Ascending aorta (tissue), 2 donors: ENCODE measurements at regions of chr16 and their contacts with region 1.

Region 1: GRCh38 chr16:50152807-50153452 is at the start of gene TENT4B:
- DNase-seq: peak; percentile 24 to 90
- H3K4me3 ChIP-seq: peak within 1 kb of the TSS; percentile 69 to 90
- H3K27ac ChIP-seq: peak within 1 kb of the TSS; percentile 96
- H3K4me1 ChIP-seq: peaks cover 0 to 17% of the 10 kb centered on the region in 2 donors
- H3K27me3 ChIP-seq: no peaks in the 10 kb centered on the region
- CTCF ChIP-seq: no peak
- total RNA-seq, gene TENT4B: 38.1 TPM

Region 2: GRCh38 chr16:49701789-49702494 is 451.0 kb before region 1 on chr16:
- intact Hi-C with region 1: loop called (anchors 5 kb)
- DNase-seq: peak; percentile 18 to 80
- H3K4me3 ChIP-seq: peak overlapping the region in 1 of 2 donors; percentile 39
- H3K27ac ChIP-seq: peak overlapping the region; percentile 88 to 89
- H3K4me1 ChIP-seq: peaks cover 7 to 25% of the 10 kb centered on the region in 2 donors
- H3K27me3 ChIP-seq: no peaks in the 10 kb centered on the region
- CTCF ChIP-seq: no peak

Region 3: DNA sequence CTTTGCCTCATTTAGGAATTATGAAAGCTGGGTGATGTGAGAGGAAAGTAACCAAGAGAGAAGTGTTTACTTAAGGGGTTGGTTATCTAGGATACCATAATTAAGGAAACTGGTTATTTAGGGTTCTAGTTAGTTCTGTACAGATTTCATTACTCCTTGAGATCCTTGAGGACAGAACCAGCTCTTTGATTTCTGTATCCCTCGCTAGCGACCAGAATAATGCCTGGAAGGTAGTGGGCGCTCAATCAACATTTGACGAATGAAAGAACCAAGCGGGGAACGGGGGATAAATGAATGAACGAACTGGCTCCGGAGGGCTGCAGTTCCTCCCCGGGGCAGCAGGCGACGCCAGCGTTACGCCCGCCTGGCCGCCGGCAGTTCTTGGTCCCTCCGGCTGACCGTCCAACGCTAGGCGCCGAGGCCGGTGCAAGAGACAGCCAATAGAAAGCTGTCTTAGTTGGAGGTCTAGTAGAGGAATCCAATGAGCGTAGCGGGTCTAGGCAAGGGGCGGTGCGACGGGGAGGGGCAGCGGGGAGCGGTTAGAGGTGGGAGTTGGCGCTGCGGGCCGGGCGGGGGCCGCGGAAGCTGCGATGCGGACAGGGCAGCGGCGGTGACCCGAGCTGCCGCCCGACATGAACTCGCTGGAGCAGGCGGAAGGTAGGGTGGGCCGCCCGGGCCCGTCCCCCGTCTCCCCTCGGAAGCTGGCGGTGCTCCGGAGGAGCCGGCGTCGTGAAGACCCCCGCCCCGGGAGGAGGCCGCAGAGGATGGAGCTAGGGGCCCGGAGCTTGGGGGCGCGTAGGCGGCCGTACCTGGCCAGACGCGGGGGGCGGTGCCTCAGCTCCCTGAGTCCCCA is 128.0 kb before region 1 on chr16 and contains the start of gene CNEP1R1:
- intact Hi-C with region 1: loop called (anchors 2 kb)
- DNase-seq: peak; percentile 81 to 97
- H3K4me3 ChIP-seq: peak within 1 kb of the TSS; percentile 85 to 92
- H3K27ac ChIP-seq: peak within 1 kb of the TSS; percentile 71 to 86
- H3K4me1 ChIP-seq: peaks cover 2 to 7% of the 10 kb centered on the region in 2 donors
- H3K27me3 ChIP-seq: no peaks in the 10 kb centered on the region
- CTCF ChIP-seq: peak; percentile 99 to 100 (median 100)
- total RNA-seq, gene CNEP1R1: 5.9 TPM

Region 4: DNA sequence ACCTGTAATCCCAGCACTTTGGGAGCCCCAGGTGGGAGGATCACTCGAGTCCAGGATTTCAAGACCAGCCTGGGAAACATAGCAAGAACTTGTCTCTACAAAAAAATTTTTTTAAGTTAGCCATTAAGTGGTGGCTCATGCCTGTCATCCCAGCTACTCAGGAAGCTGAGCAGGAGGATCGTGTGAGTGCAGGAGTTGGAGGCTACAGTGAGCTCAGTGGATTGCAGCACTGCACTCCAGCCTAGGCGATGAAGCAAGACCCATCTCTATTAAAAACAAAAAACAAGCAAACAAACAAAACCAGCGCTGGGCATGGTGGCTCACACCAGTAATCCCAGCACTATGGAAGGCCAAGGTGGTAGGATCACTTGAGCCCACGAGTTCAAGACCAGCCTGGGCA is 49.2 kb before region 1 on chr16:
- intact Hi-C with region 1: no loop called
- DNase-seq: no peak
- H3K4me3 ChIP-seq: no peak overlapping the region
- H3K27ac ChIP-seq: no peak overlapping the region
- H3K4me1 ChIP-seq: no peaks in the 10 kb centered on the region
- H3K27me3 ChIP-seq: no peaks in the 10 kb centered on the region
- CTCF ChIP-seq: no peak

Region 5: GRCh38 chr16:50185005-50185505 is 32.1 kb after region 1 on chr16:
- intact Hi-C with region 1: loop called (anchors 1 kb)
- DNase-seq: no peak
- H3K4me3 ChIP-seq: no peak overlapping the region
- H3K27ac ChIP-seq: peak overlapping the region; percentile 6 to 54
- H3K4me1 ChIP-seq: peaks cover 4 to 42% of the 10 kb centered on the region in 2 donors
- H3K27me3 ChIP-seq: no peaks in the 10 kb centered on the region
- CTCF ChIP-seq: no peak

Region 6: GRCh38 chr16:50210266-50211038 is 57.5 kb after region 1 on chr16:
- intact Hi-C with region 1: loop called (anchors 2 kb)
- DNase-seq: peak in 1 of 2 donors; percentile 89
- H3K4me3 ChIP-seq: no peak overlapping the region
- H3K27ac ChIP-seq: peak overlapping the region; percentile 17 to 43
- H3K4me1 ChIP-seq: peaks cover 13 to 44% of the 10 kb centered on the region in 2 donors
- H3K27me3 ChIP-seq: no peaks in the 10 kb centered on the region
- CTCF ChIP-seq: peak; percentile 60 to 78 (median 63)

Region 7: DNA sequence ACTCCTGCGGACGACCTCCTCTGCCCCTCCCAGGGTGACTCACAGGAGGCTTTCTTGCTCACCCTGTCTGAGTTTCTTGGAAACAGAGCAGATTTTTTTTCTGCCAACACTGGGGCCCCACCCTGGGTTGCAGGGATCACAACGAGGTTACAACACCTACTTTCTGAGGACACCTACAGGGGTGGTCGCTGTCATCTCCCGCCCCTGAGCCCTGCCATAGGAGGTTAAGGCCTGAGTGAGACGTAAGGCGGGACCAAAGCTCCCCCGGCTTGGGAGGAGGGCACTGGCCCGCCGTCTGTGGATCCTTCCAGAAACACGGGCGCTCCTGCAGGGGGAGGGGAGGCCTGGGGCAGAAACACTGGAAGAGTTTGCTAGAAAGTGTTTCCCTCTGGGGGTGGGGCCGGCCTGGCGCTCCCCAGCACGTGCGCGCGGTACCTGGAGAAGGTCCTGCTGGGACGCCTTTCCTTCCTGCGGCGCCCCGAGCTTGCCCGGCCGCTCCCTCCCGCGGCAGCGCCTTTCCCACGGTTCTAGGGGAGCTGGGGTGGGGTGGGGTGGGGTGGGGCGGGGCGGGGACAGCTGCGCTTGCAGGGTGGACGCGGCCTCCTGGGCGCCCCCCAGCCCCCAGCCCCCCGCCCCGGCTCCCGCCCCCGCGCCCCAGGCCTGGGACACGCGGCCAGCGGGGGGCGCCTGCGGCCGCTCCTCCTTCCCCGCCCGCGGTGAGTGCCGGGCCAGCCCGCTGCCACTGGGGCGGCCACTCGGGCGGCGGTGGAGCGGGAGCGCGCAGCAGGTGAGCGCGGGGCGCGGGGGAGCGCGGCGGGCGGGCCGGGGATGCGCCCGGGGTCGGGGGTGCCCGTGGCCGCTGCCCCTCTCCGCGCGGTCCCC is 92.7 kb after region 1 on chr16:
- intact Hi-C with region 1: no loop called
- DNase-seq: peak in 1 of 2 donors; percentile 81
- H3K4me3 ChIP-seq: peak overlapping the region; percentile 71 to 77
- H3K27ac ChIP-seq: peak overlapping the region in 1 of 2 donors; percentile 13
- H3K4me1 ChIP-seq: peaks cover 7 to 10% of the 10 kb centered on the region in 2 donors
- H3K27me3 ChIP-seq: no peaks in the 10 kb centered on the region
- CTCF ChIP-seq: peak in 1 of 3 experiments; percentile 19

Region 8: DNA sequence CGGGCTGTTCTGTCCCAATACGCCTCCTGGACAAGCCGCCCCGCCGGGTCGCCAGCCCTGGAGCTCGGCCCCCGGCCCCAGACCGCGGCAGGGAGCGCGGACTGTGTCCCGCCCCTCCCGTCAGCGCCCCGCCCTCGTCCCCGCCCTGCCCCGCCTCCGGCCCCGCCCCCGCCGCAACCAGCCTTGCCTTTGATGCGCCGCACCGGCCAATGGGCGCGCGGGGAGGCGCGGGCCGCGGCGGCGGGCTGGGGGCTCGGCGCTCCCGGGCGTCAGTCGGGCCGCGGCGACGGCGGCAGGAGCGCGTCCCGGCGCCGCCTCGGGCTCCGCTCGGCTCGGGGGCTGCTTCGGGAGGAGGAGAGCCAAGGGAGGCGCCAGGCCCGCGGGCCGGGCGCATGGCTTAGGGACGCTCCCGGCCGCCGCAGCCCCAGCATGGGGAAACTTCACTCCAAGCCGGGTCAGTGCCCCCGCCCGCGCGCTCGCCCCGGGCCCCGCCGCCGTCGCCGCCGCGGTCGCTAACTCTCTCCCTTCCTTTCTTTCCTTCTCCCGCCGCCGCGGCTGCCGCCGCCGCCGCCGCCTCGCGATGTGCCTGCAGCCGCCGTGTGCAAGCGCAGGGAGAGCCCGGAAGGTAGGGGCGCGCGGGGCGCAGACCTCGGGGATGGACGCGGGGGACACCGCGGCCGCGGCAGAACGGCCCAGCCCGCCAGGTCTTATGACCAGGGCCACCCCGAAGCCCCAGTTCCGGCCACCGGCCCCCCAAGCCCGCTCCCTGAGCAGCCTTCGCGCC is 395.4 kb after region 1 on chr16 and contains the start of gene NKD1:
- intact Hi-C with region 1: loop called (anchors 1 kb)
- DNase-seq: peak in 1 of 2 donors; percentile 86
- H3K4me3 ChIP-seq: peak within 1 kb of the TSS; percentile 67 to 82
- H3K27ac ChIP-seq: peak within 1 kb of the TSS; percentile 71 to 82
- H3K4me1 ChIP-seq: peaks cover 2 to 13% of the 10 kb centered on the region in 2 donors
- H3K27me3 ChIP-seq: no peaks in the 10 kb centered on the region
- CTCF ChIP-seq: no peak
- total RNA-seq, gene NKD1: 33.2 TPM